A673 (cell line): ENCODE measurements at regions of chr20 and their contacts with region 1.

Region 1: GRCh38 chr20:5126512-5127203 is at the start of gene CDS2:
- DNase-seq: peak; percentile 99
- H3K4me3 ChIP-seq: peak within 1 kb of the TSS; percentile 98
- H3K27ac ChIP-seq: peak within 1 kb of the TSS; percentile 95
- H3K4me1 ChIP-seq: peaks cover 24% of the 10 kb centered on the region
- H3K27me3 ChIP-seq: no peaks in the 10 kb centered on the region
- CTCF ChIP-seq: peak; percentile 64
- total RNA-seq, gene CDS2: 67.4 and 68.1 TPM in 2 replicates

Region 2: DNA sequence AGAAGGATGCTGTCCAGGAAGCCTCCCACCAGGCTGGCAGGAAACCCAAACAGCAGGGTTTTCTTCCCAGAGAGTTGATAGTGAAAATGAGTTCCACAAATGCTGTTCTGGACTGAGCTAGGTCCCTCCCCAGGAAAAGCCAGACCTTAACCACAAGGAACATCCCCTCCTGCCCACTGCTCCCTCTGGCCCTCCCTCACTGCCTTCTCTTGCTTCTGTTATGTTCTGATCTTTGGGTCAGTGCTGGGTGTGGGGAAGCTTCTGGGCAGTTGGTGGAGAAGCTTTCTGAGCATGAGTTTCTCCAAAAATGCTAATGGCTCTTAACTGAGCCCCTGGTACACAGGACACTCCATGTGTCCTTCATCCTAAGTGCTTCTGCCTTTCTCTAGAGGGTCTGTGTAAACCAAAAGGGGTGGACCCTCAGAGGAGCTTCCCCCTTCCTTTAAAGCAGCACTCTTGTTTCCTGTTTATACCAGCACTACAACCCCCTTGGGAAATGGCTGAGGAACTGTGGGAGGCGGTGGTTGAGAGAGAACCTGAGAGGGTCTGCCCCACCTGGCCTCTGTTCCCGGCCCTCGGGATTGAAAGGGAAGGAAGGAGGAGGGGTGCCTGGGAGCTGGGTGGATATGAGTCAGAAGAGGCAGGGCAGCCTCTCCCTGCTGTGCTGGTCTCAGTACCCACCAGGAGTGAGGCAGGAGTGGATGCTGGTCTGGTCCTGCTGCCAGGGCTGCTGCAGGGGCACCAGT is 42.2 kb after region 1 on chr20:
- CTCF ChIA-PET with region 1: interaction called, 8 read pairs
- POLR2A ChIA-PET with region 1: no interaction called
- intact Hi-C with region 1: loop called (anchors 5 kb)
- DNase-seq: peak; percentile 74
- H3K4me3 ChIP-seq: no peak overlapping the region
- H3K27ac ChIP-seq: peak overlapping the region; percentile 49
- H3K4me1 ChIP-seq: peaks cover 53% of the 10 kb centered on the region
- H3K27me3 ChIP-seq: no peaks in the 10 kb centered on the region
- CTCF ChIP-seq: no peak